Kidney (tissue), 22 donors: ENCODE measurements at regions of chr10 and their contacts with region 1.

Region 1: DNA sequence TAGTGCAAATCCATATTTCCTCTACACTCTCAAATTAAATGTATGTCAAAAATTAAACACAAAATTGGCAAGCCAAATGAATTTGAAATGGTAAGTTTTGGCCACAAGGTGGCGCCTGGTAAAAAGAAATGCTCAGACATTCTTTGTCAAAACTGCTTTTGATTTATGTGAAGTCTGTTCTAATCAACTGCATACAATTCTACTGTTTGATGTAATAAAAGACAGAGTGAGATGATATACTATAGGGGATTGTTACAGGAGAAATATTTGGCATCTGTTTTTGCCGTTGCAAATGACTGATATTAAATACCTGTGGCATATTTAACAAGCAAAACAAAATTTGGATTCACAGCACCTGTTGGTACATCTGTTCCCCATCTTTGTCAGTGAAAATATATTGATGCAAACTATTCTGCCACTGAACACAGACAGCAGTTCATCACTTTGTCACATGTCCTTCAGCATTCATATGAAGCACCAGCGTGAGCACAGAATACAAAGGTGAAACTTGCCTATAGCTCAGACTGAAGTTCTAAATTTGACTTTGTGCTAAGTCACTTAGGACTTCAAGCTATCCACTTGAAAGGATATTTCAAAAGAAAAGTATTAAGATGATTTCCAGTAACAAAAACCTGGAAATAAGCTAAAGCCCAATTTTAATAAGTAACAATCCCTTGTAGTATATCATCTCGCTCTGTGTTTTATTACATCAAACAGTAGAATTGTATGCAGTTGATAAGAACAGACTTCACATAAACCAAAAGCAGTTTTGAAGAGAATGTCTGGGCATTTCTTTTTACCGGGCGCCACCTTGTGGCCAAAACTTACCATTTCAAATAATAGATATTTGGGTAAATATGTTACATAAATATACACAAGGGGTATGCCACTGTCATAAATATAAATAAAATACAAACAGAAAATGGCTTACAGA is 10.2 kb upstream of the CH25H start:
- DNase-seq: peak in 3 of 5 donors; percentile 48 to 78 (median 65)
- H3K4me3 ChIP-seq: no peak overlapping the region
- H3K27ac ChIP-seq: peak overlapping the region in 1 of 2 donors; percentile 40
- H3K4me1 ChIP-seq: peaks cover 0 to 3% (median 0%) of the 10 kb centered on the region in 3 donors
- H3K27me3 ChIP-seq: no peaks in the 10 kb centered on the region
- CTCF ChIP-seq: peak; percentile 77

Region 2: GRCh38 chr10:88990384-88991160 is 226.8 kb before region 1 on chr10 and contains the start of gene FAS:
- intact Hi-C with region 1: no loop called
- DNase-seq: peak; percentile 78 to 95 (median 87)
- H3K4me3 ChIP-seq: peak within 1 kb of the TSS; percentile 74 to 96 (median 88)
- H3K27ac ChIP-seq: peak within 1 kb of the TSS; percentile 93 to 94
- H3K4me1 ChIP-seq: peaks cover 4 to 12% (median 8%) of the 10 kb centered on the region in 3 donors
- H3K27me3 ChIP-seq: no peaks in the 10 kb centered on the region
- CTCF ChIP-seq: no peak
- total RNA-seq, gene FAS: 45.2 TPM

Region 3: DNA sequence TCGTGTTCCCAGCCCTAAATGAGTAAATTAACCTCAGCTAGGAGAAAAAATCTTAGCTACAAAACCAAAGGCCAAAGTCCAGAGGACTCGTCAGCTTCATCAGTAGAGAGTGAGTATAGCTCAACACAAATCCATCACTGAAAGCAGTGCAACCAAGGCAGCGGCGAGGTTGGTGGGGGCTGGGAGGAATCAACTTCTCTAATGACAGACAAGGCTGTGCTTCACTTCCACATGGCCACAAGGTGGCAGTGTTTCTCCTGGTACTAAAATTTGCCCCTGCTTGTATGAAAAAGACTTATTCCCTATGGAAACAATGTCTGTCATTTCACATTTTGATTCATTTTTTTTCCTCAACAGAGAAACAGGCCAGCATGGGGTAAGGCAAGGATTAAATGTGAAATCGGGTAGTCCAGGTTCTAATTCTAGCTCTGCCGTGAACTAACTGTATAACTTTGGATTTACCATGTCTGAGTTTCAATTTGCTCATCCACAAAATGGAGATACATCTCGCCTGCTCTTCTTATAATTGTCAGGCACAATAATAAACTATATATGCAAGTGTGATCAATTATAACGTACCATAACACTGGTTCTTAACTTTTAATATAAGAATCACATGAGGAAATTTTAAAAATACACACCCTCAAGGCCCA is 187.4 kb before region 1 on chr10:
- intact Hi-C with region 1: loop called (anchors 5 kb)
- DNase-seq: peak; percentile 66 to 87 (median 78)
- H3K4me3 ChIP-seq: no peak overlapping the region
- H3K27ac ChIP-seq: no peak overlapping the region
- H3K4me1 ChIP-seq: no peaks in the 10 kb centered on the region
- H3K27me3 ChIP-seq: no peaks in the 10 kb centered on the region
- CTCF ChIP-seq: peak; percentile 90

Region 4: DNA sequence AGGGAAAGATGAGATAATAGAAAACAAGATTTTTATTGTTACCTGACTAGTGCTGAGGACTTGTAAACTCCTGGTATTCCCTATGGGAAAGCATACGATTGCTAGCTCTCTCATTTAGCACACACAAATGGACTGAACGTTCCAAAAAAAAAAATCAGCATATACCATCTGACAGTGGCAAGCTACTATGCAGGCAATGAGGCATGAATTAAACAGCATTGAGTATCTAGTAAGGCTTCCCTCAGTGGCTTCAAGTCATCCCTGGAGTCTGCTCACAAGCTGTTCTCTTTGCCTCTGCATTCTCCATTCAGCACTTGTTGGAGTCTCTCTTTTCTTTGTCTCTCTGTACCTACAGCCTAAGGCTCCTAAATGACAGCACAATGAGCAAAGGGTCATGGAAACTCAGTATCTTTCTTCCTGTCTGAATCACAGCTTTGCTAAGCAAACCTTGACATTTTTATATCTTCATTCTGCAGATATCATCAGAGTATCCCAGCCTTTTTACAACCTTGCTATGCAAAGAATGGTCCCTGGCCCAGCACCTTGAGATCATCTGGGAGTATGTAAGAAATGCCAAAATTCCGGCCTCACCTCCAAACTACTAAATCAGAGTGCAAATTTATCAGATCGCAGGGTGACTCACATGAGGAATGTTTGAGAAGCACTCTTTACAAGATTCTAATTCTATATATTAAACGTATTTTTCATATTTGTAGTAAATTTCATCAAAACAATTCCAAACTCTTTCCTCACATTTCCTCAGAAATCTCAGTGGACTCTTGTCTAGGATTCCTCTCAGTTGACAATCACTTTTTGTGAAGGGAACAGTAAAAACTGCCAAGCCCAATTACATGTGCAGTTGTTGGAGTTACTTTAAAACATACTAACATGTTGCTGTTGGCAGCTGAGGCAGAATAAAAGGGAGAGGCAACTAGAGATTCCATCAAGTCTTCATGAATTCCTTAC is 45.0 kb after region 1 on chr10:
- intact Hi-C with region 1: no loop called
- DNase-seq: no peak
- H3K4me3 ChIP-seq: no peak overlapping the region
- H3K27ac ChIP-seq: peak overlapping the region in 1 of 2 donors; percentile 30
- H3K4me1 ChIP-seq: peaks cover 0 to 5% (median 4%) of the 10 kb centered on the region in 3 donors
- H3K27me3 ChIP-seq: no peaks in the 10 kb centered on the region
- CTCF ChIP-seq: no peak

Region 5: DNA sequence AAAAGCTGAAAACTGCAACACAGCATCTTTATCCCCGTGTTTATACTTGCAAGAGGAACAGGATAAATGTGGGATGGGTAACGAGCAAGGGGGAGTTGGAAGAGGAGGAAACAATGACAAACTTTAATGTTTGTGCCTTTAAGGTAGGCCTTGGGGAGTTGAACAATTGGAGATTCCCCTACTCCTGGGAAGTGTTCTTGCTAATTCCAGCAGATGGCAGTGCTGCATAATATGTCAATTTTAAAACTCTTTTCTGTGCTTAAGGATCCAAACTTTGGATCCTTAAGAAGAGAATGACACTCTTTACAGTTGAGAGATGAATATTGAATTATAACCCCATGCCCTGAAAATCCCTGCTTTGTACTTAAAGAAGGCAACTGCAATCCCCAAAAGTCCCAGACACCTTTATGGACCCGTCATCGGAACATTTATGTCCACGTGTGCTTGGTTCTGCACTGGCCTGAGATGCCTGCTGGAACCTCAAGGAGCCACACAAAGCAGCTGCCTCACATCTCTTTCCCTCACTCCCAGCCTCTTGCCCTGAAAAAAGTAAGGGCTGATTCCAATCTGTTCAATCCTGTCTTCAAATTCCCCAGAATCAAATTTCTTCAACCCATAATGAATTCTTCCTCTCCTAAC is 209.0 kb after region 1 on chr10:
- intact Hi-C with region 1: no loop called
- DNase-seq: peak in 3 of 5 donors; percentile 19 to 81 (median 81)
- H3K4me3 ChIP-seq: no peak overlapping the region
- H3K27ac ChIP-seq: peak overlapping the region; percentile 21 to 58
- H3K4me1 ChIP-seq: peaks cover 0 to 38% (median 4%) of the 10 kb centered on the region in 3 donors
- H3K27me3 ChIP-seq: no peaks in the 10 kb centered on the region
- CTCF ChIP-seq: peak; percentile 84